MCF 10A (cell line): ENCODE measurements at regions of chr1 and their contacts with region 1.

Region 1: GRCh38 chr1:229258031-229258756 is 12.7 kb upstream of the RAB4A start:
- DNase-seq: peak; percentile 88
- H3K4me3 Mint-ChIP-seq: no peak overlapping the region
- H3K27ac Mint-ChIP-seq: no peak overlapping the region
- H3K4me1 Mint-ChIP-seq: peaks cover 23% of the 10 kb centered on the region
- H3K27me3 Mint-ChIP-seq: no peaks in the 10 kb centered on the region
- CTCF ChIP-seq: peak; percentile 98

Region 2: GRCh38 chr1:228650147-228650546 is 608.0 kb before region 1 on chr1:
- CTCF ChIA-PET with region 1: interaction called, 17 read pairs
- POLR2A ChIA-PET with region 1: interaction called, 3 read pairs
- intact Hi-C with region 1: no loop called
- DNase-seq: no peak
- H3K4me3 Mint-ChIP-seq: no peak overlapping the region
- H3K27ac Mint-ChIP-seq: no peak overlapping the region
- H3K4me1 Mint-ChIP-seq: peaks cover 26% of the 10 kb centered on the region
- H3K27me3 Mint-ChIP-seq: no peaks in the 10 kb centered on the region
- CTCF ChIP-seq: no peak

Region 3: DNA sequence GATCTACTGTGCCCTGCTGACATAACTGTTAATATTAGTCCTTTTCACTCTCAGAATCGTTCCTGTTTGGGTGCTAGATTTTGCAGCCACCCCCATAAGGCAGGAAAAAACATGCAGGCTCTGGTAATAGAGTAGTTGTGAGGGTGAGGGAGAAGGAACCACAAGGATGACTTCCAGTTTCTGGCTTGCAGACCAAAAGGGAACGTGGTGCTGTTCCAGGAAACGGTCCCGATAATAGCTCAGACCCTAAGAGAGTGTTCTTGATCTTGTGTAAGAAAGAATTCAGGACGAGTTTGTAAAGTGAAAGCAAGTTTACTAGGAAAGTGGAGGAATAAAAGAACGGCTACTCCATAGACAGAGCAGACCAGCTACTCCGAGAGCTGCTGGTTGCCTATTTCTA is 573.6 kb before region 1 on chr1:
- CTCF ChIA-PET with region 1: interaction called, 24 read pairs
- POLR2A ChIA-PET with region 1: interaction called, 6 read pairs
- intact Hi-C with region 1: no loop called
- DNase-seq: no peak
- H3K4me3 Mint-ChIP-seq: no peak overlapping the region
- H3K27ac Mint-ChIP-seq: no peak overlapping the region
- H3K4me1 Mint-ChIP-seq: no peaks in the 10 kb centered on the region
- H3K27me3 Mint-ChIP-seq: peaks cover 10% of the 10 kb centered on the region
- CTCF ChIP-seq: no peak

Region 4: DNA sequence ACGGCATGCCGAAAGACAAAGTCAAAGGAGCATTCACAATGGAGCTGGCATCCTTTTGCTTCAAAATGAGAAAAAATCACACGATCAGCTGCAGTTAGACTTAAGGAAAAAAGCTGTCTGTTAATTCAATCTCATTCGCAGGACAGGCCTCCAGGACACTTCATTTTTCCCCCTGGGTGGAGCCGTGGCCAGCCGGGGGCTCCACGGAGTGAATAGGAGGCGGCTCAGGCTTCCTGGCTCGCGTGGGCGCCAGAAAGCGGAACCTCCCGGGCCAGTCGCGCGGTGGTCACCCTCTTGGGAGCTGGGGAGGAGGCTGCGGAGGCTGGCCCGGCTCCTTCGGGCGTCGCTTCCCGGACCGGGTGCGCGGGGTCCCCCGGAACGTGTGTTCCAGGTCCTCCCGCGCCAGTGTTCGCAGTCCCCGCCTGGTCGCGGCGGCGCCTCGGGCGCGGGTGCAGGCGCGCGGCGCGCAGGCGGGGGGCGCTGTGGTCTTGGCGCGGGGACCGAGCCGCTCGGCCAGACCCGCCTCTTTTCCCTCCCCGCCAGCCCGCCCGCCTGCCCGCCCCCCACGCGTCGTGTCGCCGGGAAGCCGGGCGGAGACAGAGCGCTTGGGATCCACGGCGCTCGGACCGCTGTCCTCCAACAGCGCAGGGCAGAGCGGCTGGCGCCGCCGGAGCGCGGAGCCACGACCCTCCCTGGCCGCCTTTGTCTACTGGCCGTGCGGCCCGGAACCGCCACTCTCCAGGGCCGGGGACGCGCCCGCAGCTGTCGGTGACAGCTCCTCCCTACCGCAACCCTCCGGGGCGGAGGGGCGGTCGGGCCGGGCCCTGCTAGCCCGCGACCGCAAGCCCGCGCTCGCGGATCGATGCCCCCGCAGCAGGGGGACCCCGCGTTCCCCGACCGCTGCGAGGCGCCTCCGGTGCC is 523.1 kb before region 1 on chr1 and contains the start of gene RHOU:
- CTCF ChIA-PET with region 1: interaction called, 47 read pairs
- POLR2A ChIA-PET with region 1: interaction called, 7 read pairs
- intact Hi-C with region 1: loop called (anchors 1 kb)
- DNase-seq: peak; percentile 55
- H3K4me3 Mint-ChIP-seq: peak within 1 kb of the TSS; percentile 72
- H3K27ac Mint-ChIP-seq: peak within 1 kb of the TSS; percentile 61
- H3K4me1 Mint-ChIP-seq: peaks cover 12% of the 10 kb centered on the region
- H3K27me3 Mint-ChIP-seq: peaks cover 9% of the 10 kb centered on the region
- CTCF ChIP-seq: peak; percentile 98
- total RNA-seq, gene RHOU: 2.1 and 3.6 TPM in 2 replicates

Region 5: GRCh38 chr1:229244091-229244490 is 14.1 kb before region 1 on chr1:
- CTCF ChIA-PET with region 1: interaction called, 28 read pairs
- POLR2A ChIA-PET with region 1: interaction called, 40 read pairs
- intact Hi-C with region 1: no loop called
- DNase-seq: no peak
- H3K4me3 Mint-ChIP-seq: no peak overlapping the region
- H3K27ac Mint-ChIP-seq: no peak overlapping the region
- H3K4me1 Mint-ChIP-seq: peaks cover 11% of the 10 kb centered on the region
- H3K27me3 Mint-ChIP-seq: no peaks in the 10 kb centered on the region
- CTCF ChIP-seq: no peak

Region 6: DNA sequence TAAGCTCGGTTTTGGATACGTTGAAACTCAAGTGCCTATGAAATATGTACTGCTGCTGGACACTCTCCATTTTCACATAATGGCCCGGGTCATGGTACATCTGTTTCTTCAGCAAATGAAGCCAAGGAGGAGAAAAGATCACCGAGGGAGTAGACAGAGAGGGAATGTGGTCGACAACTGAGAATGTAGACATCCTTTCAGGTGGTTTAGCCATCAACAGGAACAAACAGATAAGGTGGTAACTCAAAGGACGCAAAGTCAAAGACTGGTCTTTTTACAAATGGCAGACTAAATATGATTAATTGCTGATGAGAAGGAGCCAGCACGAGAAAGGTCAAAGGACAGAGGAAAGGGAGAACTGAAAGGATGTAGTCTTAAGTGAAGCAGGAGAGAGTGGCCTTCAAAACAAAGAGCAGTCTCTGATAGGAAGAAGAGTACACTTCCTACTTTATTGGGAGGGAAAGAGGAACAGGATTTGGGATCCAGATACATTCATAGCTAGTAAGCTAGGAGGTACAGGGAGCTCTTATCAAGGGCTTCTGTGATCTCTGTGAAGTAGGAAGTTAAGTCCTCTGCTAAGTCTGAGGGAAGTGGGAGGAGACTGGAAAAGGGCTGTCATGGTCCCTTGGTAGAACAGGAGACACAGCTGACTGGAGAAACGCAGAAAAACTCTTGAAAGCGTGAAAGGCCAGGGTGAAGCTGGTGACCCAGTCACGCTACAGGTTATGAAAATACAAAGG is 221.6 kb after region 1 on chr1:
- CTCF ChIA-PET with region 1: interaction called, 200 read pairs
- POLR2A ChIA-PET with region 1: interaction called, 7 read pairs
- intact Hi-C with region 1: loop called (anchors 1 kb)
- DNase-seq: no peak
- H3K4me3 Mint-ChIP-seq: no peak overlapping the region
- H3K27ac Mint-ChIP-seq: peak overlapping the region; percentile 0
- H3K4me1 Mint-ChIP-seq: no peaks in the 10 kb centered on the region
- H3K27me3 Mint-ChIP-seq: no peaks in the 10 kb centered on the region
- CTCF ChIP-seq: no peak

Region 7: DNA sequence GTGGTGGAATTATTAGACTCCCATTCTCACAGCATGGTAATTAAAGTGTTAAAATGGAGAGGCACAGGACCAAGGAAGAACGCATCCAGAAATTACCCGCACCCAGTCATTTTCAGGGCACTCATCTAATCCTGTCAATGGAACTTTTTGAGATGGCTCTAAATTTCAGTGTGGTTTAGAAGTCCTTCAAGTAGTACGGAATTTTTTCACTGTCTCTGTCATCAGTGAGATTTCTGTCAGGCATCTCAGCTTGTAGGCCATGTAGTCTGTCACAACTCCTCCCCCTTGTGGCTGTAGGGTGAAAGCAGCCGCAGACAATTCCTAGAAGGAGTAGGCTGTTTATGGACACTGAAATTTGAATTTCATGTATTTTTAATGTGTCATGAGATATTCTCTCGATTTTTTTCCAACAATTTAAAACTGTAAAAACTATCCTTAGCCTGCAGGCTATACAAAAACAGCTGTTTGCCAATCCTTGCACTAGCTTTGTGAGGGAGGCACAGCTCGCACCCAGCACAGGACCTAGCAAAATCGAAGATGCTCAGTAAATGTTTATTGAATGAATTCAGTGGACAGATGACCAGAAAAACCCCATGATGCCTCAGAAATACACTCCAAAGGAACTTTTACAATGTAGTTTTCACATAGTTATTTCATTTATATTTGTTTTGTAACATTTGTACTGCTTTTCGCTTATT is 256.5 kb after region 1 on chr1:
- CTCF ChIA-PET with region 1: interaction called, 22 read pairs
- POLR2A ChIA-PET with region 1: interaction called, 3 read pairs
- intact Hi-C with region 1: loop called (anchors 1 kb)
- DNase-seq: peak; percentile 90
- H3K4me3 Mint-ChIP-seq: no peak overlapping the region
- H3K27ac Mint-ChIP-seq: no peak overlapping the region
- H3K4me1 Mint-ChIP-seq: peaks cover 6% of the 10 kb centered on the region
- H3K27me3 Mint-ChIP-seq: no peaks in the 10 kb centered on the region
- CTCF ChIP-seq: peak; percentile 91